Right cardiac atrium (tissue), 5 donors: ENCODE measurements at regions of chr3 and their contacts with region 1.

Region 1: GRCh38 chr3:112734718-112735350 is 93.9 kb upstream of the CCDC80 start:
- DNase-seq: peak in 2 of 3 donors; percentile 37 to 67
- ATAC-seq: peak; percentile 54 to 64
- H3K4me3 ChIP-seq: no peak overlapping the region
- H3K27ac ChIP-seq: no peak overlapping the region
- H3K4me1 ChIP-seq: no peaks in the 10 kb centered on the region
- H3K27me3 ChIP-seq: no peaks in the 10 kb centered on the region

Region 2: GRCh38 chr3:112818289-112818688 is 83.5 kb after region 1 on chr3:
- intact Hi-C with region 1: no loop called
- DNase-seq: no peak
- ATAC-seq: no peak
- H3K4me3 ChIP-seq: no peak overlapping the region
- H3K27ac ChIP-seq: no peak overlapping the region
- H3K4me1 ChIP-seq: no peaks in the 10 kb centered on the region
- H3K27me3 ChIP-seq: no peaks in the 10 kb centered on the region

Region 3: DNA sequence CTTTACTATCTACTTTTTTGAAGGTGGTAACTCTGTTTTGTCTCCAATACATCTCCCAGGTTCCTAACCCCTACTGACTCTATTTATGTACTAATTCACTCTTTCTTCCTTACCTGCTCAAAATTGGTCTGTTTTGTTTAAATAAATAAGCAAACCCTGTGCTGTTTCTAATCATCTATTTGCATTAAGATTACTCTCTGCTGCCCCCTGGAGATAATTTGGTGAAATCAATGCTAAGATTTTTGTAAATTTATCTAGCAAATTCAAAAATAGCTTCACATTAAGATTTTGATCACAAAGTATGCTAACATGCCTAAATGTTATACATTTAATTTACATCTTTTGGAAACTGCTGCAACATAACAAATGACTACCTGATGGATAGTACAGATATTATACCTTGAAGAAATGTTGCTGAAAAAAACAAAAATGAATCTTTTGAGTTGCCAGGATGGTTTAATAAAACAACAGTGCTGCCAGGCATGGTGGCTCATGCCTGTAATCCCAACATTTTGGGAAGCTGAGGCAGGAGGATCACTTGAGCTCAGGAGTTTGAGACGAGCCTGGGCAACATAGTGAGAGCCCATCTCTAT is 244.5 kb after region 1 on chr3:
- intact Hi-C with region 1: loop called in 2 of 4 experiments (anchors 10 kb)
- DNase-seq: no peak
- ATAC-seq: no peak
- H3K4me3 ChIP-seq: no peak overlapping the region
- H3K27ac ChIP-seq: no peak overlapping the region
- H3K4me1 ChIP-seq: no peaks in the 10 kb centered on the region
- H3K27me3 ChIP-seq: no peaks in the 10 kb centered on the region